ENCODE measurements at regions of chr17 and their contacts with region 1.

Region 1: DNA sequence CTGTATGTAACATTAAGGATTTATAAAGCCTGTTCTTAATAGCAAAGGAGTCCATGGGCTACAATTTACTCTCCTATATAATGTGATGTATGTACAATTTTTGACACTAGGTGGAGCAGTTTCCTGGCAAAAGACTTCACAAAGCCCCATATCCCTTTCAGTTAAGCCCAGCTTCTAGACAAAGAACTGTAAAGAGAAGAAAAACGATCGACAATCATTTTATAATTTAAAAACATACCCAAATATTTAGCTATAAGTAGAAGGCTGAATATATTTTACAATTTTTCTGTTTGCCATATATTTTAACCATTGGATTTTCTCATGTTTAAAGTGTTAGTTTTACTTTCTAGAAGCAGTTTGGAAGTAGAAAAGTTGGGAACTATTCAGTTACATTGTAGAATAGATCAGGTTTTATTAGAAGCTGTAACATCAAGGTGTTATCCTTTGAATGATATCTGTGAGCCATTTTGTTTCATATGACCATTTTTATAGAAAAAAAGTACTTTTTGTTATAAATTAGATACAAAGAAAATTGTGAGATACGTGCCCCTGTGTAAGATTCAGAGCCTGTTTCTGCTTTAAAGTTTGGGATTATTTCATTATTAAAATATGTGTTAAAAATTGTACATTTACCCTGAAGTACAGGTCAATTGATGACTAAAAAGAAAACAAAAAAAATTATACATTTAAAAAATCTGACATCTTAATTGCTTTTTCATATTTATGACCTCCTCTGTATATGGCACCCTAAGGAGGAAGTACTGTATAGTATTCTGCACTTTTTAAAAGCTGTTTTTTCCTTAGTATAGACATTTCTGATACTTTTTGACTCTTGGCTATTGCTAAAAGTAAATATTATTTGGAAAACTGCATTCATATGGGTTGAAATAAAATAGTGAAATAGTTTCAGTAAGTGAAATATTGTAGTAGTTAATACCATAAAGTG is 46.3 kb downstream of the VMP1 start:
- DNase-seq: peak in 3 of 9 experiments; percentile 15 to 86 (median 80)
- ATAC-seq: peak; percentile 98
- H3K4me3 ChIP-seq: no peak overlapping the region
- H3K4me3 Mint-ChIP-seq: no peak overlapping the region
- H3K27ac ChIP-seq: no peak overlapping the region
- H3K27ac Mint-ChIP-seq: peak overlapping the region; percentile 58
- H3K4me1 ChIP-seq: peaks cover 10% of the 10 kb centered on the region
- H3K4me1 Mint-ChIP-seq: peaks cover 16% of the 10 kb centered on the region
- H3K27me3 ChIP-seq: no peaks in the 10 kb centered on the region
- H3K27me3 Mint-ChIP-seq: no peaks in the 10 kb centered on the region
- CTCF ChIP-seq: peak; percentile 75

Region 2: GRCh38 chr17:59786536-59787319 is 32.9 kb after region 1 on chr17:
- CTCF ChIA-PET with region 1: no interaction called
- POLR2A ChIA-PET with region 1: interaction called, 3 read pairs
- intact Hi-C with region 1: loop called in 1 of 2 experiments (anchors 1 kb)
- DNase-seq: peak; percentile 21 to 96 (median 70)
- ATAC-seq: peak; percentile 89
- H3K4me3 ChIP-seq: peak overlapping the region; percentile 20 to 35
- H3K4me3 Mint-ChIP-seq: peak overlapping the region; percentile 78
- H3K27ac ChIP-seq: peak overlapping the region; percentile 43 to 83
- H3K27ac Mint-ChIP-seq: peak overlapping the region; percentile 94
- H3K4me1 ChIP-seq: peaks cover 35% of the 10 kb centered on the region
- H3K4me1 Mint-ChIP-seq: peaks cover 39% of the 10 kb centered on the region
- H3K27me3 ChIP-seq: no peaks in the 10 kb centered on the region
- H3K27me3 Mint-ChIP-seq: no peaks in the 10 kb centered on the region
- CTCF ChIP-seq: no peak

Region 3: GRCh38 chr17:59837308-59838051 is 83.7 kb after region 1 on chr17:
- CTCF ChIA-PET with region 1: interaction called, 11 read pairs
- POLR2A ChIA-PET with region 1: interaction called, 3 read pairs
- intact Hi-C with region 1: loop called in 1 of 2 experiments (anchors 1 kb)
- DNase-seq: peak in 7 of 9 experiments; percentile 28 to 94 (median 57)
- ATAC-seq: peak; percentile 93
- H3K4me3 ChIP-seq: peak overlapping the region; percentile 14 to 64
- H3K4me3 Mint-ChIP-seq: peak overlapping the region; percentile 92
- H3K27ac ChIP-seq: peak overlapping the region; percentile 69 to 94
- H3K27ac Mint-ChIP-seq: peak overlapping the region; percentile 93
- H3K4me1 ChIP-seq: peaks cover 24% of the 10 kb centered on the region
- H3K4me1 Mint-ChIP-seq: peaks cover 48% of the 10 kb centered on the region
- H3K27me3 ChIP-seq: no peaks in the 10 kb centered on the region
- H3K27me3 Mint-ChIP-seq: no peaks in the 10 kb centered on the region
- CTCF ChIP-seq: no peak

Region 4: GRCh38 chr17:59859444-59860025 is 105.7 kb after region 1 on chr17:
- CTCF ChIA-PET with region 1: interaction called, 11 read pairs
- POLR2A ChIA-PET with region 1: interaction called, 3 read pairs
- intact Hi-C with region 1: loop called (anchors 1 kb)
- DNase-seq: peak in 2 of 9 experiments; percentile 54 to 64
- ATAC-seq: peak; percentile 61
- H3K4me3 ChIP-seq: no peak overlapping the region
- H3K4me3 Mint-ChIP-seq: no peak overlapping the region
- H3K27ac ChIP-seq: no peak overlapping the region
- H3K27ac Mint-ChIP-seq: no peak overlapping the region
- H3K4me1 ChIP-seq: no peaks in the 10 kb centered on the region
- H3K4me1 Mint-ChIP-seq: peaks cover 4% of the 10 kb centered on the region
- H3K27me3 ChIP-seq: no peaks in the 10 kb centered on the region
- H3K27me3 Mint-ChIP-seq: no peaks in the 10 kb centered on the region
- CTCF ChIP-seq: peak; percentile 65

Region 5: DNA sequence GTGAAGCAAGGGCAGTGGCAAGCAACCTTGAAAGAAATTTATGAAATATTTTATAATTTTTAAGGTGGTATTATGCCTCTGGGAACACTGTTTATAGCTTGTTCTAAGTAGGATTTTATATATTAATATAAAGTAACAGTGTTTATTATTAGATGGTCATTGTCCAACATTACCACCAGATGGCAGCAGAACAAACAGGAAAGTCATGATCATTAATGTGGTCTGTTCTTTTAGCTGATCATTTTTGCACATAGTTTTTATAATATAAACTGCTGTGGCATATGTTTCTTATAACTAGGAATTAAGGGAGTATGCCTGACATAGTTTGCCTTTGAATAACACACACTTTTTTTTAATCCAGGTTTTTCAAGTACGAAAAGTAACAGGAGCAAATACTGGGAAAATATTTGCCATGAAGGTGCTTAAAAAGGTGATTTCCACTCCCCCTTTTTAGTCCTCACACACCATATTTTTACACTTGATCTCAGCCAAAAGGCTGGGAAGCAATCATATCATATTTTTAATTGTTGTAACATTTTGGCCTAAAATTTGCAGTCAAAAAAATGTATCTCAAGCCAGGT is 160.6 kb after region 1 on chr17:
- CTCF ChIA-PET with region 1: interaction called, 5 read pairs
- POLR2A ChIA-PET with region 1: no interaction called
- intact Hi-C with region 1: loop called in 1 of 2 experiments (anchors 5 kb)
- DNase-seq: peak in 2 of 9 experiments; percentile 57 to 68
- ATAC-seq: peak; percentile 70
- H3K4me3 ChIP-seq: no peak overlapping the region
- H3K4me3 Mint-ChIP-seq: no peak overlapping the region
- H3K27ac ChIP-seq: no peak overlapping the region
- H3K27ac Mint-ChIP-seq: no peak overlapping the region
- H3K4me1 ChIP-seq: no peaks in the 10 kb centered on the region
- H3K4me1 Mint-ChIP-seq: peaks cover 11% of the 10 kb centered on the region
- H3K27me3 ChIP-seq: no peaks in the 10 kb centered on the region
- H3K27me3 Mint-ChIP-seq: no peaks in the 10 kb centered on the region
- CTCF ChIP-seq: peak; percentile 62

Region 6: GRCh38 chr17:60036796-60037612 is 283.2 kb after region 1 on chr17:
- CTCF ChIA-PET with region 1: interaction called, 58 read pairs
- POLR2A ChIA-PET with region 1: no interaction called
- intact Hi-C with region 1: loop called in 1 of 2 experiments (anchors 10 kb)
- DNase-seq: peak; percentile 29 to 83 (median 69)
- ATAC-seq: peak; percentile 98
- H3K4me3 ChIP-seq: no peak overlapping the region
- H3K4me3 Mint-ChIP-seq: no peak overlapping the region
- H3K27ac ChIP-seq: no peak overlapping the region
- H3K27ac Mint-ChIP-seq: no peak overlapping the region
- H3K4me1 ChIP-seq: peaks cover 3% of the 10 kb centered on the region
- H3K4me1 Mint-ChIP-seq: peaks cover 4% of the 10 kb centered on the region
- H3K27me3 ChIP-seq: peaks cover 0 to 3% of the 10 kb centered on the region in 2 experiments
- H3K27me3 Mint-ChIP-seq: peaks cover 6% of the 10 kb centered on the region
- CTCF ChIP-seq: peak; percentile 76